AG04450 (cell line): ENCODE measurements at regions of chr6 and their contacts with region 1.

Region 1: DNA sequence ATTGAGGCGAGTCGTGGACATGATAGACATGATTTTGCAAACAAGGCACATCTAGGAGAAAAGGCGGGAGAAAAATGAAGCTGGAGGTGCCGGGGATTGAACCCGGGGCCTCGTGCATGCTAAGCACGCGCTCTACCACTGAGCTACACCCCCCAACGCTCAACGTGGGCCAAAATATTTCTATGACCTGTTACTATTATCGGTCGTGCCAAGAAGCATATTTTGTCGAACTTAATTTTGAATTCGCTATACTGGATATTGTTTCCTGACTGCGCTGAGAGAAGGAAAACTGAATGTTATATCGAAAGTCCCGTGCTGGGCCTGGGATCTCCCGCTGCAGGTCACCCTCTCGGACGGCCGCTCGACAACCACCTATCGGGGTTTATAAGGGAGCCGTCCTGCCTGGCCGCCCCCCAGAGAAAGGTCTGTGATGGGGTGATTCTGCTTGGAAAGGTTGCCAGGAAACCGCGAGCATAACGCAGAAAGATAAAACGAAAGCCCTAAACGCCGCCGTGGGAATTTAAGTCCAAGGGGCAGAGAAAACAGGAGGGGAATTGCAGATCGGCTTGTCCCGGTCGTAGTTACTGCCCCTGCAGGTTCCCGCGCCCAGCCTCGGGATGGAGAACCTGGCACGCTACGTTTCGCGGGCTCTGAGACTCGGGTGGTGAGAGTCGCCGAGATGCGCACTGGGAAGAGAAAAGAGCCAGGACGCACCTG is 60.0 kb downstream of the TRIM27 start:
- DNase-seq: peak; percentile 72
- H3K4me3 ChIP-seq: peak overlapping the region; percentile 84
- H3K27ac ChIP-seq: peak overlapping the region; percentile 47
- H3K27me3 ChIP-seq: no peaks in the 10 kb centered on the region
- CTCF ChIP-seq: no peak

Region 2: DNA sequence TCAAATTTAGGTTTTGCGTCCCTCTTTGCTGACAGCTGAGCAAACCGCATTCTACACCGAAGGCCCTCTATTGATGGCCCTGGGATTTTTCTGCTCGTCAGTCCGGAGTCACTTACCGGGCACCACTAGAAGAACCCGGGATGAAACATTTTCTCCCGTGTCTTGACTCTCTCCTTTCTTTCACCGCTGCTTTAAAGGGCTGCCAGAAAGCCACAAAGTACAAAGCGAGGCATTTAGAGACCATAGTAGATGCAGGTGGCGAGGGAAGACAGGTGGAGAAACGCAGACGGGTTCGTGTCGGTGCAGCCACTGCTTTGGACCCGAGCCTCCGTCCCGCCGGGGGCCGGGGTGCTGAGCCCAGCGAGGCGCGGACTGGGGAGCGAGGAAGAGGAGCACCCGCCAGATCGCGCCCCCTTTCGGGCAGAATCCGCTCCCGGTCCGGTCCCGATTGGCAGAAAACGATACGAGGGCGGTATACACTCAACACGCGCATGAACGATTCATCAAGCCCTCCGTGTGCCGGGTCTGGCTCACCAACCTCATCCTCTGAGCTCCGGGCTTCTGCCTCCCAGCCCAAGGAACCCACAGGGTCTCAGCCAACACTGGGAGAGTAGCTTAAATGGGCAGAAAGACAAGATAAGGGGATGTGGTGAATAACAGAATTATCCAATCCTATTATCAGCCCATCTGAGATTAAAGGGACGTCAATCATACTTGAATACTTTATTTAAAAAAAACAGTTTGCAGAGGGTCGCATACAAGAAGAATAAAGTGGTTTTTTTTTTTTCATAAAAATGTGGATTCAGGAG is 24.9 kb before region 1 on chr6:
- CTCF ChIA-PET with region 1: interaction called, 20 read pairs
- POLR2A ChIA-PET with region 1: interaction called, 3 read pairs
- DNase-seq: peak; percentile 38
- H3K4me3 ChIP-seq: peak overlapping the region; percentile 81
- H3K27ac ChIP-seq: no peak overlapping the region
- H3K27me3 ChIP-seq: no peaks in the 10 kb centered on the region
- CTCF ChIP-seq: peak; percentile 82

Region 3: DNA sequence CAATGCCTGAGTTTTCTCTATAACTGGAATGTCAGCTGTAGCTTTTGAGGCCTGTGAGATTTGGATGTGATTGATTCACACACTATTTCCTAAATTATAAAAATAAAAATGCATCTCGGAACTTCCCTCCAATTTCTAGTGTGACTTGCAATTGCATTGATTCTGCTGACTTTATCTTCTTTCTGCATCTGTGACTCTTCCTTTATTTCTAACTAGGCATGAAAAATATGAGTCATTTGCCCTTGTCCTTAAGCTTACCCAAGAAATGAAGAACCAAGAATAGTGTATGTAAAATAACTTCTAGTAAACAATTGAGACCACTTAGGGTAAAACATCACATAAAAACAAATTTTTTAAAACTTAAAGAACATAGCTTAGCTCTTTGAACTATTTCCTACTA is 319.8 kb after region 1 on chr6:
- CTCF ChIA-PET with region 1: no interaction called
- POLR2A ChIA-PET with region 1: no interaction called
- DNase-seq: no peak
- H3K4me3 ChIP-seq: no peak overlapping the region
- H3K27ac ChIP-seq: no peak overlapping the region
- H3K27me3 ChIP-seq: no peaks in the 10 kb centered on the region
- CTCF ChIP-seq: no peak